ENCODE measurements at regions of chr2 and their contacts with region 1.

Region 1: DNA sequence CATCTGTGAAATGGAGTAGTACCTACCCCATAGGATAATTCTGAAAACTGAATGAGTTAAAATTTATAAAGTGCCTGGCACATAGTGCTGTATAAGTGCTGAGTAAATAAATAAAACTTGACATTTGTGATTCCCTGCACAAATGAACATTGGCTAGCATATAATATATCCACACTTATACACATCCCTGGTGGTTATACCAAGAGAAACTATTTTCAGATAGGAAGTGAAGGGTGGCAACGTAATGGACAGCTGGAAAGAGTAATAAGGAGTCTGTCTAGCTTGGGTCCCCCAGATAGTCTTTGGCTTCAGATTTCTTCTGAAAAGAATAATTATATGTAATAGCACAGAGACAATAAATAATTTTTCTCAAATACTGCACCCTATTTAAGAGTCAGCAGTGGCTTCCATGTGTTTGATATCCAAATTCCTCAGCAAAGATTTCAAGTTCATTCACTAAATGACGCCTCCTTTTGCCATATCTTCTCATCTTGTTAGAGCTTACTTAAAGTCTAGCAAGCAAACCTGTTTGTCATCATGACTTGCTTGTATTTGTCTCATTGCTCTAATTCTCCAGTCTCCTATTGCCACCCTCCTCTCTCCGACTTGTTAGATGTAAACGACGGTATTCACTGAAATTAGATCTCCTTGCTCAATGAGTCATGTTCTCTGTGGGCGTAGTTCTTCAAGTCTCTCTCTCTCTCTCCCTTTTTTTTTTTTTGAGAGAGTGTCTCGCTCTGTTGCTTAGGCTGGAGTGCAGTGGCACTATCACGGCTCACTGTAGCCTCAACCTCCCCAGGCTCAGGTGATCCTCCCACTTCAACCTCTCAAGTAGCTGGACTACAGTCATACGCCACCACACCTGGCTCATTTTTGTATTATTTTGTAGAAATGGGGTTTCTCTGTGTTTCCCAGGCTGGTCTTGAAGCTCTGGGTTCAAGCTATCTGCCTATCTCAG is 8.7 kb upstream of the ADGRF3 start:
- DNase-seq: peak; percentile 19
- ATAC-seq: peak; percentile 63
- H3K4me3 Mint-ChIP-seq: no peak overlapping the region
- H3K27ac Mint-ChIP-seq: peak overlapping the region; percentile 27
- H3K4me1 Mint-ChIP-seq: peaks cover 69% of the 10 kb centered on the region
- H3K27me3 Mint-ChIP-seq: no peaks in the 10 kb centered on the region

Region 2: GRCh38 chr2:26251893-26252292 is 103.4 kb before region 1 on chr2:
- CTCF ChIA-PET with region 1: no interaction called
- POLR2A ChIA-PET with region 1: no interaction called
- intact Hi-C with region 1: no loop called
- DNase-seq: no peak
- ATAC-seq: no peak
- H3K4me3 Mint-ChIP-seq: no peak overlapping the region
- H3K27ac Mint-ChIP-seq: no peak overlapping the region
- H3K4me1 Mint-ChIP-seq: peaks cover 24% of the 10 kb centered on the region
- H3K27me3 Mint-ChIP-seq: no peaks in the 10 kb centered on the region

Region 3: DNA sequence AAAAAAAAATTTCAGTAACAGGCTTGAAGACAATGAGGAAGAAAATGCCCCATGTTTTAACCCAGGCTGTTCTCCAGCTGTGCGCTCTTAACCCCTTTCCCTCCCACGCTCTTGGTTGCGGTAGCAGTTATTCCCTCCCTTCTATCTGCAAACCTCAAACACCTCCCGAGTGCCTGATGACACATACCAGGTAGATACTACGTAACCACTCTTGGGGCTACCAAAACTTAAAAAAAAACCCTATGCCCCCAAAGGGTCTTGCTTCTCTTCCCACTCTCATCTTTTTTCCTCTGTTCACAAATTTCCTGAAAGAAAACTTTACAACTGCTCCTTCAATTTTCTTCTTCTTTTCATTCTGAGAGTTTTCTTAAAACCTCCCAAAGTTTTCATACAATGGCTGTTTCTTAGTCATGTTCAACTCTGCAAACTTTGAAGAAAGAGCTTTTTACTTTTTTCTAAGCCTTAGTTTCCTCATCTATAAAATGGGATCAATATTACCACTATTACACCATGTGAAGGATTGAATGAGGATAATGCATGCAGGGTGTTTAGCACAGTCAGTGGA is 41.5 kb after region 1 on chr2:
- CTCF ChIA-PET with region 1: no interaction called
- POLR2A ChIA-PET with region 1: no interaction called
- intact Hi-C with region 1: loop called in 1 of 2 experiments (anchors 5 kb)
- DNase-seq: peak; percentile 77
- ATAC-seq: peak; percentile 87
- H3K4me3 Mint-ChIP-seq: no peak overlapping the region
- H3K27ac Mint-ChIP-seq: no peak overlapping the region
- H3K4me1 Mint-ChIP-seq: peaks cover 21% of the 10 kb centered on the region
- H3K27me3 Mint-ChIP-seq: peaks cover 5% of the 10 kb centered on the region